ENCODE measurements at regions of chr7 and their contacts with region 1.

Region 1: DNA sequence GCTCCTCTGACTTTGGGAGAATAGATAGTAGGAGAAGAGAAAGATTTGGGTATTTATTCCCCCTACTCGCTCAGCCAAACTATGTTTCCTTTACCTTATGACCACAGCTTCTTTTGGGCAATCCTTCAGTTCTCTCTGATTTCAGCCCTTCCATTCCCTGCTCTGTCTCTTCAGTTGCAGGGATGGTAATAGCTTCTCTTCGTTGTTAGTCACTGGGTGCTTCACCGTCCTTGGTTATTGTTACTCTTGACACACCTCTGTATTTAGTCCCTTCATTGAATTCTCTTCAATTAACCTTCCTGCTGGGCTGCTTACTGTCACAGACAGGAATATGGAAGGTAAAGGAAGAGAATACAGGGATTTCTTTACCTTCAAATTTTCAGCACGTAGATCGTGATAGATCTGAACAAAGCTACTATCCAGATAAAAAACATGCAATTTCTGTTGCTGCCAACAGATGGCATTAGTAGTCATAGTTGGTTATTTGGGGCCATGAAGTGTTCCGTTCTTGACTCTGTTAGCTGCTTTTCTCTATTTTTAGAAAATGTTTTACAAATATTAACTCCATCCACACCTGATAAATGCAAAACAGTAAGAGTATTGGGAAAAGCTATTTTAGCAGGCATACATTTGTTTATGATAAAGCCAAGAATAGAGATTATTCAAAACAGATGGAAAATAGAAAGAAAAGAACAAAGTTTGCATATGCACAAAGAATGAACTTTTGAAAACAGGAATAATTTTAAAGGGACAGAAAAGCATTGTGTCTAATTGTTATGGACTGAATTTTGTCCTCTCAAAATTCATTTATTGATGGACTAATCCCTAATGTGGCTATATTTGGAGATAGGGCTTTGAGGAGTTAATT is 14.0 kb upstream of the PTTG1IP2 start:
- DNase-seq: peak; percentile 41
- H3K4me3 ChIP-seq: peak overlapping the region in 1 of 3 experiments; percentile 7
- H3K27ac ChIP-seq: no peak overlapping the region
- H3K4me1 ChIP-seq: no peaks in the 10 kb centered on the region
- H3K27me3 ChIP-seq: no peaks in the 10 kb centered on the region
- CTCF ChIP-seq: peak; percentile 70 to 72

Region 2: DNA sequence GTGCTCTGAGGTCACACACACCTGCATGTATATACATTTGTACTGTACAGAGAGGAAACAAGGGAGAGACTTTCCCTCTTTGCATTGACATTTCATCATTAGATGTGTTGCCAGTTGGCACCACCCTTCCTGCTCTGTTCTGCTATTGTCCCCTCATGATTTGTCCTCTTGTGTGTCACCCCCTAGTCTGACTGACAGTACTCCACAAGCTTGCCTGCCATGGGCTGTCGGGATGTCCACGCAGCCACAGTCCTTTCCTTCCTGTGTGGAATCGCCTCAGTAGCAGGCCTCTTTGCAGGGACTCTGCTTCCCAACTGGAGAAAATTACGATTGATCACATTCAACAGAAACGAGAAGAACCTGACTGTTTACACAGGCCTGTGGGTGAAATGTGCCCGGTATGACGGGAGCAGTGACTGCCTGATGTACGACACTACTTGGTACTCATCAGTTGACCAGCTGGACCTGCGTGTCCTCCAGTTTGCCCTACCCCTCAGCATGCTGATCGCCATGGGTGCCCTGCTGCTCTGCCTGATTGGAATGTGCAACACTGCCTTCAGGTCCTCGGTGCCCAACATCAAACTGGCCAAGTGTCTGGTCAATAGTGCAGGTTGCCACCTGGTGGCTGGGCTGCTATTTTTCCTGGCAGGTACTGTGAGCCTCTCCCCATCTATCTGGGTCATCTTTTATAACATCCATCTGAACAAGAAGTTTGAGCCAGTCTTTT is 42.8 kb before region 1 on chr7:
- CTCF ChIA-PET with region 1: no interaction called
- dilution Hi-C with region 1: no loop called
- in situ Hi-C with region 1: no loop called
- intact Hi-C with region 1: no loop called
- DNase-seq: peak; percentile 30
- H3K4me3 ChIP-seq: no peak overlapping the region
- H3K27ac ChIP-seq: no peak overlapping the region
- H3K4me1 ChIP-seq: peaks cover 2% of the 10 kb centered on the region
- H3K27me3 ChIP-seq: no peaks in the 10 kb centered on the region
- CTCF ChIP-seq: peak; percentile 44 to 59

Region 3: GRCh38 chr7:90520484-90520883 is 65.1 kb after region 1 on chr7:
- CTCF ChIA-PET with region 1: no interaction called
- dilution Hi-C with region 1: no loop called
- in situ Hi-C with region 1: no loop called
- intact Hi-C with region 1: loop called (anchors 2 kb)
- DNase-seq: no peak
- H3K4me3 ChIP-seq: no peak overlapping the region
- H3K27ac ChIP-seq: no peak overlapping the region
- H3K4me1 ChIP-seq: no peaks in the 10 kb centered on the region
- H3K27me3 ChIP-seq: no peaks in the 10 kb centered on the region
- CTCF ChIP-seq: peak; percentile 33 to 50